ENCODE measurements at regions of chr18 and their contacts with region 1.

Region 1: DNA sequence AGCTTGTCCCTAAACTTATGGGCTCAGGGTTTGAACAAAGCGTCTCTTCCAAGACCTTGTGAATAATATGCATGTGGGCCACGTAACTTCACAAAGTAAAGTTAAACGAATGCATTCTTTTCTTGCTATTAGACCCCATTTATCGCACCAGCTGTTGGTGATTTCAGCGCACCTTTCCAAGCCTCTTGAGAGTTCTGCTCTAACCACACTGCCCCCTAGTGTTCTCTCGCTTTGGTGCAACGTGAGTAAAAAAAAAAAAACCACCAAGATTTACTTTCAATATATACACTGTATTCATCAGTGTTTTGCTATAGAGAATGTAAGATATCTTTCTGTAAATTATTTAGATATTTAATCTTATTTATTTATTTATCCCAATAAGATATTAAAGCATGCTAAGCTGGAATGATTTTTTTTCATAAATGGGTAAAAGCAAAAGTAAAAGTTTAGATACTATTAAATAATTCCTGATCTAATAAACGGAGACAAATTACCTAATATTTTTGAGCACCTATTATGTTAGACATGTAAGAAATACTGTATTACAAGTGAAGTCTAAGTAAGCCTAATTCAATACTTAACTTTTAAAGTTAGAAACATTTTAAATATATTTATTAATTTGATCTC is 459.5 kb downstream of the DLGAP1 start:
- DNase-seq: peak; percentile 47
- ATAC-seq: peak; percentile 44; the same call in 1 of the 2 replicates
- H3K4me3 Mint-ChIP-seq: no peak overlapping the region
- H3K27ac Mint-ChIP-seq: no peak overlapping the region
- H3K4me1 Mint-ChIP-seq: peaks cover 13% of the 10 kb centered on the region
- H3K27me3 Mint-ChIP-seq: no peaks in the 10 kb centered on the region
- CTCF ChIP-seq: peak; percentile 72

Region 2: DNA sequence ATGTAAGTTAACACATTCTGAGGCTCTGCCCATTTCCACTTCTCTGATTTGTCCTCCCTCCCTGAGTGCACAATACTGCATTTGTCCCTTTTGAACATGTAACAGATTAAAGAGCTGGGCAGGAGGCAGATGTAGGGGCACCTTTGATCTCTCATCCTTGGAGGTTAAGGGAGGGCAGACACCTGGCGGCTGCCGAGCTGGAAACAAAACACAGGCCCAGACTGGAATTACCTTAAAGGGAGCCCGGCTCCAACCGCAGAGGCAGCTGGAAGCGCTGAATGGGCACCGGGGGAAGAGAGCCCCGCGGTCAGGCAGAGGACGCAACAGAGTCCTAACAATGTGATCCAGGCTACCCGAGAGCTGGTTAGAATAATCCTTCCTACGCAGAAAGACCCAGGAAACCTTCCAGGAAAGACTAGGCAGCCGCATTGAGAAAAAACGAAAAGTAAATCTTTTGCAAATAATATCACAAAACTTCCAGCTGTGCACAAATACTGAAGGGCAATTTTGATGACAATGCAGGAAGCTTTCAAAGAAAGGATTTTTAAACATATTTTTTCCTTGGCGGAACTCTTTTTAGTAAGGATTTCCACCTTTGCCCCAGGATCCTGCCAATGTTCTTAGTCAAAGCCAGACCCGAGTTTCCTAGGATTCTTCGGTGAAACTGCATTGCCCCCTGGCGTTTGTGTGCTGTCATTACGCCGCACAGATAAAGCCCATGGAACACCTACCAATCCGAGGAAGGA is 329.6 kb before region 1 on chr18:
- CTCF ChIA-PET with region 1: no interaction called
- POLR2A ChIA-PET with region 1: no interaction called
- DNase-seq: peak; percentile 85
- ATAC-seq: peak; percentile 89
- H3K4me3 Mint-ChIP-seq: peak overlapping the region; percentile 65
- H3K27ac Mint-ChIP-seq: peak overlapping the region; percentile 98
- H3K4me1 Mint-ChIP-seq: peaks cover 27% of the 10 kb centered on the region
- H3K27me3 Mint-ChIP-seq: no peaks in the 10 kb centered on the region
- CTCF ChIP-seq: peak; percentile 94

Region 3: GRCh38 chr18:3966985-3967856 is 28.4 kb before region 1 on chr18:
- CTCF ChIA-PET with region 1: interaction called, 18 read pairs
- POLR2A ChIA-PET with region 1: no interaction called
- DNase-seq: peak; percentile 48
- ATAC-seq: peak; percentile 92
- H3K4me3 Mint-ChIP-seq: no peak overlapping the region
- H3K27ac Mint-ChIP-seq: no peak overlapping the region
- H3K4me1 Mint-ChIP-seq: peaks cover 41% of the 10 kb centered on the region
- H3K27me3 Mint-ChIP-seq: no peaks in the 10 kb centered on the region; the same call in 1 of the 2 replicates
- CTCF ChIP-seq: no peak

Region 4: DNA sequence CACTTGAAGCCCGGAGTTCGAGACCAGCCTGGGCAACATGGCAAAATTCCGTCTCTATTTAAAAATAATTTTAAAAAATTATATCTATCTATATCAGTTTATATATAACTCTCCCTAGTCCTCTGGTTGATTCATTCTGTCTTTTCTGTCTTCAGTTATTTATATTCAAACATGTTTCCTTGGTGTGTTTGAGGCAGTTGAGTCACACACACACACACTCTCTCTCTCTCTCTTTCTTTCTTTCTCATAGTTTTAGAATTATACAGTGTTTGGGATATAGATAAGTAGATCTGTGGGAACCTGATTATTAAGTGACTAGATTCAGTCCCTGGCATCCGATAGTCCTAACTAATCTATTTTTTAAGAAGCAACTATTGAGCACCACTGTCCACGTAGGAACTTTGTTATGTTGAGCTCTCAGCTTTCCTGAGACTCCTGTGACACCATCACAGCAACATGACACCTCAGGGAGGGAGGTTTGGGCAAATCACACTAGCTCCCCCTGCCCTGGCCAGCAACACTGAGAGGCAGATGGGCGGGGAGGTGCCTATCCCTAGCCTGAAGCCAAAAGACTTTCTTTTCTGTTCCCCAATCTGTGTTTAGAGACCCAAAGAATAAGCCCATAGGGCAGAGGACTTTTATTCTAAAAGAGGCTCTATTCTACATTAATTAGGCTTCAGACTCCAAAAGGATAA is 23.2 kb before region 1 on chr18:
- CTCF ChIA-PET with region 1: interaction called, 18 read pairs
- POLR2A ChIA-PET with region 1: no interaction called
- DNase-seq: peak; percentile 72
- ATAC-seq: peak; percentile 99
- H3K4me3 Mint-ChIP-seq: no peak overlapping the region
- H3K27ac Mint-ChIP-seq: no peak overlapping the region
- H3K4me1 Mint-ChIP-seq: peaks cover 25% of the 10 kb centered on the region
- H3K27me3 Mint-ChIP-seq: peaks cover 12% of the 10 kb centered on the region
- CTCF ChIP-seq: no peak

Region 5: DNA sequence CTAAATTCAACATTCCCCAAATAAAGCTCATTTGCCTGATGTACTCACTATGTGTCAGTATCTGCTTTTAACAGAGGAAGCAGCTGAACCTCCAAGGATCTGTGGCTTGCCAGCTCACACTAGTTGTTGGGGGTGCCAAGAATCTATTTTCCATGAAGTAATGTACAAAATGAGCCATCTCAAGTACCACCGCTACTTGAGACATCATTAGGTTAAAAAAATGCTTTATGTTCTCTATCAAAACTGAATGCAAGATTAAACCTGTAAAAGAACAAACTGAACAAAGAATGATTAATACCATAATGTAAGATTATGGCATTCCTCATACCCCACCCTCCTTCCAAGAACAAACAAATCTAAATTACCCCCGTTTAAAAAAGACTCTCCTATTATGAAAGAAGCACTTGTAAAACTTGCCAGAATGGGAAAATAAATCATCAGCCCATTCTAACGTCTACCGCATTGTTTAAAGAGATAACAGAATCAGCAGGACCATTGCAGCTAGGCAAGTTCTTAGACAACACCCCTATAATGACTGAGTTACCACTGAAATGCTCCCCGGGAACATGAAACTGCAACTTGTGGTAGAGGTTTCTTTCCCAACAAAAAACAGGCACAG is 12.1 kb before region 1 on chr18:
- CTCF ChIA-PET with region 1: interaction called, 26 read pairs
- POLR2A ChIA-PET with region 1: no interaction called
- DNase-seq: no peak
- ATAC-seq: no peak
- H3K4me3 Mint-ChIP-seq: no peak overlapping the region
- H3K27ac Mint-ChIP-seq: no peak overlapping the region
- H3K4me1 Mint-ChIP-seq: peaks cover 15% of the 10 kb centered on the region
- H3K27me3 Mint-ChIP-seq: no peaks in the 10 kb centered on the region
- CTCF ChIP-seq: no peak

Region 6: DNA sequence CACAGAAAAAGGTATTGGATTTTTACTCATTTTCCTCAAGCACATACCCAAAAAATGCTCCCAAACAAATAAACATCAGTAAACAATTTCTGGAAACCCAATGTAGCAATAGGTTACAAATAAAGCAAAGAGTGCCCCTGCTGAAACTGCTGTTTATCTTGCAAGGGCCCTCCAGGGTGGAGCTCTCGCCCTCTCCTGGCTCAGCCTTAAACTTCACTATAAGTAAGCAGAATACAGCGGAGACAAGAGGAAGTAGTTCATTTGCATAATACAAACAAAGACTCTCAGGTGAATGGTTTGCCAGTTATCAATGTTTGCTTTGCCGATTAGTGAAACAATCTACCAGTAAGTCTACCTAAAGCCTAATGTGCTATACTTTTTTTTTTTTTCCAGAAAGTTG is 21.9 kb after region 1 on chr18:
- CTCF ChIA-PET with region 1: interaction called, 16 read pairs
- POLR2A ChIA-PET with region 1: no interaction called
- DNase-seq: peak; percentile 48
- ATAC-seq: peak; percentile 91
- H3K4me3 Mint-ChIP-seq: no peak overlapping the region
- H3K27ac Mint-ChIP-seq: peak overlapping the region; percentile 71
- H3K4me1 Mint-ChIP-seq: peaks cover 56% of the 10 kb centered on the region
- H3K27me3 Mint-ChIP-seq: no peaks in the 10 kb centered on the region; the same call in 1 of the 2 replicates
- CTCF ChIP-seq: no peak

Measured in WTC11 (cell line).